Activated CD4-positive, alpha-beta T cell treated with anti-CD3 and anti-CD28 coated beads, Interleukin-2, amount 10 ng/mL, durations not matched to agents 24 days and 14 days (primary cell): ENCODE measurements at regions of chr4 and their contacts with region 1.

Region 1: DNA sequence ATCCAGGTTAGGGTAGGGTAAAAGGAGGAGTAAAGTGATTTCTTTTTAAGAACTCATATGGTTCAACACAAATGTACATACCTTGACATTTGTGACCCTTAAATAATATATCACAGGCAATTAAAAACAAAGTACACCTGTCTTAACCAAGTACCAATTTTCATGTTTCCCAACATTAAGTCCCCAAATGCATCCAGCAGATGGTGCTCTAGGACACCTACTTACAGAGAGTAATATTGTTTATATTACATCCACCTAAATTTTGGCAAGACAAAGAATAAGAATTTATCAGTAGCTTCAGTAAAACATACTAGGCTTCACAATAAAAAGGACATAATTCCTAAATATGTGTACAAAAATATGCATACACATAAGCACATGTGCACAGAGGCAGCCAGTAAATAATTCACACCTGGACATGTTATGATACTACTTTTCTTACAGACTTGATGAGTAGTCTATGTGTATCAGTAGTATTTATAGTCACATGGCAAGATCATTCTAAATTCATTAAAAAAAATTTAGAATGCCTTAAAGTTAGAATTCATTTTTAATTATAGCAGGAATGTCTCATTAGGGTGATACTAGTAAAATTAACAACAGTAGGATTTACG is 219.7 kb downstream of the DCLK2 start:
- DNase-seq: peak; percentile 78
- H3K4me3 Mint-ChIP-seq: no peak overlapping the region
- H3K27ac Mint-ChIP-seq: no peak overlapping the region
- H3K4me1 Mint-ChIP-seq: peaks cover 7% of the 10 kb centered on the region
- H3K27me3 Mint-ChIP-seq: no peaks in the 10 kb centered on the region

Region 2: GRCh38 chr4:150366487-150366999 is 68.6 kb after region 1 on chr4:
- intact Hi-C with region 1: loop called (anchors 10 kb)
- DNase-seq: no peak
- H3K4me3 Mint-ChIP-seq: no peak overlapping the region
- H3K27ac Mint-ChIP-seq: no peak overlapping the region
- H3K4me1 Mint-ChIP-seq: peaks cover 10% of the 10 kb centered on the region
- H3K27me3 Mint-ChIP-seq: no peaks in the 10 kb centered on the region

Region 3: GRCh38 chr4:150436598-150437370 is 138.8 kb after region 1 on chr4:
- intact Hi-C with region 1: loop called (anchors 1 kb)
- DNase-seq: no peak
- H3K4me3 Mint-ChIP-seq: peak overlapping the region; percentile 2
- H3K27ac Mint-ChIP-seq: peak overlapping the region; percentile 20
- H3K4me1 Mint-ChIP-seq: peaks cover 8% of the 10 kb centered on the region
- H3K27me3 Mint-ChIP-seq: no peaks in the 10 kb centered on the region

Region 4: GRCh38 chr4:150970685-150971151 is 672.8 kb after region 1 on chr4:
- intact Hi-C with region 1: loop called (anchors 5 kb)
- DNase-seq: peak; percentile 49
- H3K4me3 Mint-ChIP-seq: no peak overlapping the region
- H3K27ac Mint-ChIP-seq: peak overlapping the region; percentile 71
- H3K4me1 Mint-ChIP-seq: peaks cover 27% of the 10 kb centered on the region
- H3K27me3 Mint-ChIP-seq: no peaks in the 10 kb centered on the region

Region 5: GRCh38 chr4:151099229-151099975 is 801.4 kb after region 1 on chr4 and contains the start of gene RPS3A:
- intact Hi-C with region 1: loop called (anchors 5 kb)
- DNase-seq: peak; percentile 100
- H3K4me3 Mint-ChIP-seq: peak within 1 kb of the TSS; percentile 98
- H3K27ac Mint-ChIP-seq: peak within 1 kb of the TSS; percentile 98
- H3K4me1 Mint-ChIP-seq: peaks cover 48% of the 10 kb centered on the region
- H3K27me3 Mint-ChIP-seq: peaks cover 4% of the 10 kb centered on the region
- total RNA-seq, gene RPS3A: 1,850 and 1,855 TPM in 2 replicates